Posterior vena cava (tissue), 2 donors: ENCODE measurements at regions of chr1 and their contacts with region 1.

Region 1: GRCh38 chr1:46303038-46303871 is at the starts of genes LRRC41 and UQCRH:
- DNase-seq: peak; percentile 98
- total RNA-seq, gene LRRC41: 40.7 to 45.3 TPM
- total RNA-seq, gene UQCRH: 127 to 149 TPM

Region 2: GRCh38 chr1:46223472-46223943 is 79.7 kb before region 1 on chr1:
- intact Hi-C with region 1: no loop called
- DNase-seq: peak; percentile 87

Region 3: DNA sequence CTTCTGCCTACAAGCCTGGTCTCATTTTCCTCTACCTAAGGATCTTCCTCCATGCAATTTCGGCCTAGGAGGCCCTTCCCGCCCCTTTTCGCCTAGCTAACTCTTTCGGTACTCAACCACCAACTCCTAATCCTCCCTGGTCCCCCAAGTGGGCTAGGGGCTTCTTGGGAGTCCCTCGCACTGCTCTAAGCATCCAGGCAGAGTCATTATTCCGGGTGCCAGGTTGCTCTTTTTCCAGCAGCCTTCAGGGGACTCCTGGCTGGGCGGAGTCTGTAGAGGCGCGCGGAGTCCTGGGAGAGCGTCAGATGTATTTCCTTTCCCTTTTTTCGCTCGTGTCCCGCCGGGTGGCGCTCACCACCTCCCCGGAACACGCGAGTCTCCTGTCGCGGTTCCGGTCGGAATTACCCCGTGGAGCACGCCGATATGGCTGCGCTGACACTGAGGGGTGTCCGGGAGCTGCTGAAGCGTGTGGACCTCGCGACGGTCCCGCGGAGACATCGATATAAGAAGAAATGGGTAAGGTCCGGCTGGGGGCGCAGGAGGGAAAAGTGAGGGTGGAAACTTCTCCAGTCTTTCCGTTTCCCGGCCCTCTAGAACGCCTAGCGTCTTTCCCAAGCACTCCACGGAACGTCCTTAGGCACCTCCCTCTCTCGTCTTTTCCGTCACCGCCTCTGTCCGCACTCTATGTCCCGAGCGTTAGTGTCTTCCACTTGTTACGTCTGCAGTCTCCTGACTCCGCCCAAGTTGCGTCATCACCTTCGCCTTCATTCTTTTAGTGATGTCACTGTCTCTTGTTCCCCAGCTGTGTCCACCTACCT is 37.4 kb after region 1 on chr1 and contains the start of gene NSUN4:
- intact Hi-C with region 1: loop called in 1 of 2 experiments (anchors 5 kb)
- DNase-seq: peak; percentile 98
- total RNA-seq, gene NSUN4: 17.3 to 18.9 TPM